ENCODE measurements at regions of chr6 and their contacts with region 1.

Region 1: GRCh38 chr6:105179244-105180065 is at the start of gene POPDC3:
- DNase-seq: peak; percentile 52
- ATAC-seq: peak; percentile 59
- H3K4me3 ChIP-seq: peak within 1 kb of the TSS; percentile 89
- H3K27ac ChIP-seq: peak within 1 kb of the TSS; percentile 92
- H3K4me1 ChIP-seq: peaks cover 21% of the 10 kb centered on the region
- H3K27me3 ChIP-seq: no peaks in the 10 kb centered on the region
- CTCF ChIP-seq: no peak
- total RNA-seq, gene POPDC3: 31.6 and 41.4 TPM in 2 replicates

Region 2: GRCh38 chr6:105209950-105210706 is 30.7 kb after region 1 on chr6:
- CTCF ChIA-PET with region 1: no interaction called
- POLR2A ChIA-PET with region 1: no interaction called
- intact Hi-C with region 1: loop called (anchors 2 kb)
- DNase-seq: peak; percentile 88
- ATAC-seq: peak; percentile 77
- H3K4me3 ChIP-seq: peak overlapping the region; percentile 47
- H3K27ac ChIP-seq: peak overlapping the region; percentile 94
- H3K4me1 ChIP-seq: peaks cover 54% of the 10 kb centered on the region
- H3K27me3 ChIP-seq: no peaks in the 10 kb centered on the region
- CTCF ChIP-seq: no peak

Region 3: DNA sequence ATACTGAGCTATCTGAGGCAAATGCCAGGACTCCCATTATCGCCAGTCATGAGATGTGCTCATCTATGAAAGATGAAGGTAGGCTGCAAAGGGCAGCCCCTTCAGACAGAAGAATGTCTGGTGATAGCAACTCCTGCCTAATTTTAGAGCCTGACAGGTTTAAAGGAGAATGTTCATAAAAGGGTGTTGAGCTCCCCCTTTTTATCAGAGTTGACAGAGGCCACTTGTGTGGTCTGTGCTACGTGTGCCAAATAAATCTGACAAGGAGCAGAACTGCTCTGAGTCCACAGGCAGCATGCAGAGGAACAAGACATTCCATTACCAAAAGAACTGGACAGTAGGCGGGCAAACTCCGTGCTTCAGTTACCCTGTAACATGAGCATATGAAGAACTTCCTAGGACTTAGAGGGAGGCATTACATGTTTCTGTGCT is 121.6 kb after region 1 on chr6:
- CTCF ChIA-PET with region 1: interaction called, 4 read pairs
- POLR2A ChIA-PET with region 1: no interaction called
- intact Hi-C with region 1: loop called (anchors 2 kb)
- DNase-seq: no peak
- ATAC-seq: no peak
- H3K4me3 ChIP-seq: no peak overlapping the region
- H3K27ac ChIP-seq: no peak overlapping the region
- H3K4me1 ChIP-seq: peaks cover 10% of the 10 kb centered on the region; the same call in 1 of the 2 replicates
- H3K27me3 ChIP-seq: no peaks in the 10 kb centered on the region
- CTCF ChIP-seq: no peak

Region 4: GRCh38 chr6:105363100-105363754 is 183.8 kb after region 1 on chr6:
- CTCF ChIA-PET with region 1: interaction called, 6 read pairs
- POLR2A ChIA-PET with region 1: no interaction called
- intact Hi-C with region 1: loop called (anchors 5 kb)
- DNase-seq: peak; percentile 52
- ATAC-seq: no peak
- H3K4me3 ChIP-seq: no peak overlapping the region
- H3K27ac ChIP-seq: no peak overlapping the region
- H3K4me1 ChIP-seq: peaks cover 17% of the 10 kb centered on the region
- H3K27me3 ChIP-seq: no peaks in the 10 kb centered on the region
- CTCF ChIP-seq: peak; percentile 62

Region 5: DNA sequence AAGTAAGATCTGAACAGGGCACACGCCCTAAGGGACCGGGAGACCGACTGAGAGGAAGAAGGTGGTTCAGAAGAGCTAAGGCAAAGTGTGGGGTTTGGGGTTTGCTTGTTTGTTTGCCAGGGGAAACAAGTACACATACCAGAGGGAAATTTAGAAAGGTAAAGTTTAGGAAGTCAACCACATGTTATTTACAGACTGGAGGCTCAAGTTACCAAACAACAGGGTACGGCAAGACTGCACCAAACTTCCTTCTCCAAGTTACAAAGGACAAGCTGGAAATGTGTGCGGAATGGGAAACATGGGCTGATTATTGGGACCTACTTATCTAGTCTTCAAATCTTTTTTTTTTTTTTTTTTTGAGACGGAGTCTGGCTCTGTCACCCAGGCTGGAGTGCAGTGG is 212.2 kb after region 1 on chr6:
- CTCF ChIA-PET with region 1: interaction called, 10 read pairs
- POLR2A ChIA-PET with region 1: no interaction called
- intact Hi-C with region 1: no loop called
- DNase-seq: no peak
- ATAC-seq: no peak
- H3K4me3 ChIP-seq: no peak overlapping the region
- H3K27ac ChIP-seq: no peak overlapping the region
- H3K4me1 ChIP-seq: no peaks in the 10 kb centered on the region
- H3K27me3 ChIP-seq: no peaks in the 10 kb centered on the region
- CTCF ChIP-seq: no peak

Region 6: GRCh38 chr6:105402939-105403935 is 223.8 kb after region 1 on chr6 and contains the start of gene PREP:
- CTCF ChIA-PET with region 1: no interaction called
- POLR2A ChIA-PET with region 1: no interaction called
- intact Hi-C with region 1: loop called (anchors 5 kb)
- DNase-seq: peak; percentile 76
- ATAC-seq: peak; percentile 92
- H3K4me3 ChIP-seq: peak within 1 kb of the TSS; percentile 94
- H3K27ac ChIP-seq: peak within 1 kb of the TSS; percentile 64
- H3K4me1 ChIP-seq: peaks cover 20% of the 10 kb centered on the region
- H3K27me3 ChIP-seq: no peaks in the 10 kb centered on the region
- CTCF ChIP-seq: peak; percentile 79
- total RNA-seq, gene PREP: 16.9 and 18.5 TPM in 2 replicates